Activated CD4-positive, alpha-beta T cell treated with anti-CD3 and anti-CD28 coated beads for 36 hours (primary cell): ENCODE measurements at regions of chr9 and their contacts with region 1.

Region 1: GRCh38 chr9:5301544-5301943 is 3.0 kb downstream of the RLN2 start:
- DNase-seq: no peak
- ATAC-seq: no peak
- H3K4me3 Mint-ChIP-seq: peak overlapping the region; percentile 51
- H3K27ac Mint-ChIP-seq: peak overlapping the region; percentile 51
- H3K4me1 Mint-ChIP-seq: peaks cover 22% of the 10 kb centered on the region
- H3K27me3 Mint-ChIP-seq: no peaks in the 10 kb centered on the region

Region 2: GRCh38 chr9:5336688-5337087 is 35.1 kb after region 1 on chr9:
- CTCF ChIA-PET with region 1: no interaction called
- POLR2A ChIA-PET with region 1: interaction called, 3 read pairs
- intact Hi-C with region 1: loop called in 1 of 2 experiments (anchors 2 kb)
- DNase-seq: peak; percentile 14
- ATAC-seq: no peak
- H3K4me3 Mint-ChIP-seq: peak overlapping the region; percentile 49
- H3K27ac Mint-ChIP-seq: peak overlapping the region; percentile 52
- H3K4me1 Mint-ChIP-seq: peaks cover 37% of the 10 kb centered on the region
- H3K27me3 Mint-ChIP-seq: no peaks in the 10 kb centered on the region